WTC11 (cell line): ENCODE measurements at regions of chr5 and their contacts with region 1.

Region 1: DNA sequence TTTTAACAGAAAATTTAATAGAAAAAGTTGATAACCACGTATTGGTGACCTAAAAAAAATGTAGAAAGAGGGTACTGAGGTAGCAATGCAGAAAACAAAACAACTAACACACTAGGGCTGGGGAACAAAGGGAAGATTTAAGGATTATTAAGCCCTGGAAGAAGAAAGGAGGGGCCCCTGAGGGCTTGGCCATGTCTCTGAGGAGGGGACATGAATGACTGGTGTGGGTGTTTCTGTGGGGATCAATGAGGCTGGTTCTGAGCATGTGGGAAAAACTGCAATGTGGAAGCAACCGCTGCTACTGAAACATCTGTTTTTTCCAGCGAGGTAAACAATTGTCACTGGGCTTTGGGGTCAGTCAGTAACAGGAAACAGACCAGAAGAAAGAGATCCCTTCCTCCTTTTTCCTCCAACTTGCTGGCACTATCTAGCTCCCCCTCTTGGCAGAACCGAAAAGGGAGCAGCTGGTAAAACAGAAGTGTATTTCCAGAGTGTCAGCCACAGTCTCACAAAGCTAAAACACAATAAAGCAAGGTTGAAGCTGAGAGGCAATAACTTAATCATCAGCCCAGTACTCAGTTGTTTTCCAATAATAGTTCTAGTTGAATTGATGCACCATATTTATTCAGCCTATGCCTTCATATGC is 48.3 kb downstream of the ATPSCKMT start:
- DNase-seq: peak; percentile 51
- ATAC-seq: peak; percentile 94
- H3K4me3 Mint-ChIP-seq: no peak overlapping the region
- H3K27ac Mint-ChIP-seq: no peak overlapping the region
- H3K4me1 Mint-ChIP-seq: peaks cover 18% of the 10 kb centered on the region
- H3K27me3 Mint-ChIP-seq: no peaks in the 10 kb centered on the region
- CTCF ChIP-seq: no peak

Region 2: GRCh38 chr5:9888501-9888901 is 312.8 kb before region 1 on chr5:
- CTCF ChIA-PET with region 1: no interaction called
- POLR2A ChIA-PET with region 1: no interaction called
- DNase-seq: no peak
- ATAC-seq: no peak
- H3K4me3 Mint-ChIP-seq: no peak overlapping the region
- H3K27ac Mint-ChIP-seq: no peak overlapping the region
- H3K4me1 Mint-ChIP-seq: peaks cover 10% of the 10 kb centered on the region
- H3K27me3 Mint-ChIP-seq: no peaks in the 10 kb centered on the region; the same call in 1 of the 2 replicates
- CTCF ChIP-seq: no peak

Region 3: GRCh38 chr5:10162468-10162867 is 38.9 kb before region 1 on chr5:
- CTCF ChIA-PET with region 1: interaction called, 14 read pairs
- POLR2A ChIA-PET with region 1: no interaction called
- DNase-seq: no peak
- ATAC-seq: peak; percentile 21
- H3K4me3 Mint-ChIP-seq: no peak overlapping the region
- H3K27ac Mint-ChIP-seq: peak overlapping the region; percentile 34; the same call in 1 of the 2 replicates
- H3K4me1 Mint-ChIP-seq: peaks cover 46% of the 10 kb centered on the region
- H3K27me3 Mint-ChIP-seq: no peaks in the 10 kb centered on the region
- CTCF ChIP-seq: no peak

Region 4: GRCh38 chr5:10323588-10324488 is 122.5 kb after region 1 on chr5:
- CTCF ChIA-PET with region 1: no interaction called
- POLR2A ChIA-PET with region 1: no interaction called
- DNase-seq: no peak
- ATAC-seq: no peak
- H3K4me3 Mint-ChIP-seq: no peak overlapping the region
- H3K27ac Mint-ChIP-seq: no peak overlapping the region
- H3K4me1 Mint-ChIP-seq: no peaks in the 10 kb centered on the region
- H3K27me3 Mint-ChIP-seq: peaks cover 6% of the 10 kb centered on the region
- CTCF ChIP-seq: no peak

Region 5: DNA sequence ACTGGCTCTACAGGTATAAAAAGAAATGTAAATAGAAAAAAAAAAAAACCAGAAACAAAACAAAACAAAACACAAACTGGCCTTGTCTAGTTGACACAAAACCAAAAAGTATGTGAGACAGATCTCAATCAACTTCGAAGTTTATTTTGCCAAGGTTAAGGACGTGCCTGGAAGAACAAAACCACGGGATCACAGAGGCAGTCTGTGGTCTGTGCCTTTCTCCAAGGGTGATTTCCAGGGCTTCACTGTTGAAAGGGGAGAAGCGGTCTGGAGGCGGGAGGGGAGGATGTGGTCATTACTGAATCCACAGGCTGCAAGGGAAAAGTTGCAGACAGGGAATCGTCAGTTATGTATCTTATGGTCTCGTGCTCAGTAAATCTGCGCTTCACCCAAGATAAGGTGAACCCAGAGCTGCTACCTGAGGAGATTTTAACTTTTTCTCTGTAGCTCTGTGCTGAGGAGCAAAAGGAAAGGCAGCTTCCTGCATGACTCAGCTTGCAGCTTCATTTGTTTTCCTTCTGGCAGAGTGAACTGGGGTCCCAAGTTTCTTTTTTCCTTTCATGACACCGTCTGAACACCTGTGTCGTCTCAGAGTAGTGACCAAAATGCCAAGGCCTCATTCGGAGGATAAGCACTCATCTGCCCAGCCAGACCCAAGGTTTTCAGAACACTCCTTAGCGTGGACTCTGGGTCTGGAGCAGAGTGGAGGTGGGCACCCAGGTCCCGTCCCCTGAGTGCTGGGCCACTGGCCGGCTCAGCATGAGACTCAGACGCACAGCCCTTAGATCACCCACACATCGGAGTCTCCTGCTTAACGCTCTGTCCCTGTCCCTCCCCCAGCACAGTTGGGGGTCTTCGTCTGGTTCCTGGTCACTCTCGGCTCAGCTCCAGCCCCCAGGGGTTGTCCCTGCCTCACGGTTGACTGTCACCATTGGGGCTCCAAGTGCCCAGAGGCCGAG is 266.2 kb after region 1 on chr5:
- CTCF ChIA-PET with region 1: no interaction called
- POLR2A ChIA-PET with region 1: no interaction called
- DNase-seq: no peak
- ATAC-seq: peak; percentile 78
- H3K4me3 Mint-ChIP-seq: no peak overlapping the region
- H3K27ac Mint-ChIP-seq: peak overlapping the region; percentile 61; the same call in 1 of the 2 replicates
- H3K4me1 Mint-ChIP-seq: peaks cover 22% of the 10 kb centered on the region
- H3K27me3 Mint-ChIP-seq: no peaks in the 10 kb centered on the region
- CTCF ChIP-seq: no peak